GM12878 (cell line): ENCODE measurements at regions of chr21 and their contacts with region 1.

Region 1: DNA sequence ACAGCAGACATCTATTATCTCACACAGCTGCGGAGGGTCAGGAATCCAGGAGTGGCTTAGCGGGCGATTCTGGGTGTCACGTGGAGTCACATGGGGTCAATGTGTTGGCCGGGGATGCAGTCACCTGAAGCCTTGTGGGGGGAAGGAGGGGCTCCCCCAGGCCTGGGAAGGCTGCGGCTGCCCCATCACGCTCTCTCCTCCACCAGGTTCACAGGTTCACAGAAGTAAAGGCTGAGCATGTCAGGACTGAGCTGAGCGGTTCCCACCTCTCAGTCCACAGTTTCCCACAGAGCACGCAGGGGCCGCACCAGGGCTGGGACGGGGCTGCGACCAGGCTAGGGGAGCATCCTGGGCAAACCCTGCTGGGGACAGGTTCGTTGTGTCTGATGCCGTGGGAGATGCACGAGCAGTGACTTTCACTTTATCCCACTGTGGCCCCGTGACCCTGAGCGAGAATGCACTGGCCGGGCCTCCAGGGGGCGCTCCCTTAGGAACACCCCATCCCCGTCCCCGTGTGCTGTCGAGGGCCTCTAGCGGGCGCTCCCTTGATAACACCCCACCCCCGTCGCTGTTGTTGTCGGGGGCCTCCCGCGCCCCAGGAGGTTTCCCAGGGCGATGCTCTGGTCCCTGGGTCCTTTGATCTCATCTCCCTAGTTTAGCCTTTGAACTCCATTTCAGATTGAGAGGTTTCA is 73.2 kb upstream of the TRAPPC10 start:
- DNase-seq: peak; percentile 84
- ATAC-seq: peak; percentile 94
- H3K4me3 ChIP-seq: peak overlapping the region; percentile 70
- H3K27ac ChIP-seq: peak overlapping the region; percentile 79
- H3K4me1 ChIP-seq: peaks cover 26% of the 10 kb centered on the region
- H3K27me3 ChIP-seq: no peaks in the 10 kb centered on the region
- CTCF ChIP-seq: peak; percentile 100; a peak in 5 of 6 replicates
- EP300 ChIP-seq: peak; percentile 70 to 76; a peak in 3 of 4 replicates
- POLR2A ChIP-seq: peak; percentile 71
- RAD21 ChIP-seq: peak; percentile 95

Region 2: GRCh38 chr21:43718872-43719747 is 219.8 kb before region 1 on chr21 and contains the start of gene PDXK:
- CTCF ChIA-PET with region 1: no interaction called
- POLR2A ChIA-PET with region 1: no interaction called
- RAD21 ChIA-PET with region 1: interaction called, 3 read pairs
- SMC1A ChIA-PET with region 1: no interaction called
- in situ Hi-C with region 1: no loop called
- intact Hi-C with region 1: loop called (anchors 5 kb)
- DNase-seq: peak; percentile 35
- ATAC-seq: peak; percentile 69
- H3K4me3 ChIP-seq: peak within 1 kb of the TSS; percentile 88
- H3K27ac ChIP-seq: peak within 1 kb of the TSS; percentile 86
- H3K4me1 ChIP-seq: peaks cover 50% of the 10 kb centered on the region
- H3K27me3 ChIP-seq: no peaks in the 10 kb centered on the region
- CTCF ChIP-seq: peak; percentile 13 to 47 (median 15); a peak in 4 of 6 replicates
- EP300 ChIP-seq: peak; percentile 12 to 41; a peak in 1 of 4 replicates
- POLR2A ChIP-seq: peak; percentile 80
- RAD21 ChIP-seq: no peak
- polyA plus RNA-seq, gene PDXK: 3.7 to 11.4 TPM

Region 3: DNA sequence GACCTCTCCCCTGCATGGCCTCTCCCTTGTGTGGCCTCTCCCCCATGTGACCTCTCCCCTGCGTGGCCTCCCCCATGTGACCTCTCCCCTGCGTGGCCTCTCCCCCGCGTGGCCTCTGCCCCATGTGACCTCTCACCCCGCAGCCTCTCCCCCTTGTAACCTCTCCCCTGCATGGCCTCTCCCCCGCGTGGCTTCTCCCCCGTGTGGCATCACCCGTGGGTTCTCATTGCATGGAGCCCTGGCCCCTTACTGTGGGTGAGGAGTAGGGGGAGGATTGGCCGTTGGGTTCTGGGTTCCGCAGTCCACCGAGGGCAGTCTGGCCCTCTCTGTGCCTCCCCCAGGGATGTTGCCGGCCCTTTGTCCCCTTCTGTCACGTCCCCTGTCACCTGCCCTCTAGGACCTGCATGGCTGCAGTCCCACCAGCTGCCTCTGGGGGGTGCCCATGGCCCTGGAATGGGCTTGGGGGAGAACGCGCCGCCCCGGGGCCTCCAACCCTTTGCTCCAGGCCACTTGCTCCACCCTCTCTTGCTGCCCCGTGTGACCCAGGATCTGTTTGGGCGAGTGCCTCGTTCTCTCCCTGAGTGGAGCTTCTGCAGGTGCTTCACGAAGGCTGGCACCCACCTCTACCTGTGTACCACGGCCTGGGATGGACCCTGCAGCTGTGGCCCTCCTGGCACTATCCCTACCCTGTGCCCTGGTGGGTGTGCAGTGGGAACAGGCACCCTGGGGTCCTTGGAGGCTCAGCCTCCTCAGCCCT is 128.2 kb before region 1 on chr21:
- CTCF ChIA-PET with region 1: interaction called, 39 read pairs
- POLR2A ChIA-PET with region 1: interaction called, 4 read pairs
- RAD21 ChIA-PET with region 1: interaction called, 21 read pairs
- SMC1A ChIA-PET with region 1: interaction called, 3 read pairs
- in situ Hi-C with region 1: no loop called
- intact Hi-C with region 1: loop called (anchors 1 kb)
- DNase-seq: peak; percentile 51
- ATAC-seq: peak; percentile 91
- H3K4me3 ChIP-seq: no peak overlapping the region
- H3K27ac ChIP-seq: peak overlapping the region; percentile 50
- H3K4me1 ChIP-seq: peaks cover 44% of the 10 kb centered on the region
- H3K27me3 ChIP-seq: no peaks in the 10 kb centered on the region
- CTCF ChIP-seq: peak; percentile 98 to 99 (median 99)
- EP300 ChIP-seq: no peak
- POLR2A ChIP-seq: no peak
- RAD21 ChIP-seq: peak; percentile 99

Region 4: GRCh38 chr21:43816611-43817478 is 122.1 kb before region 1 on chr21:
- CTCF ChIA-PET with region 1: interaction called, 39 read pairs
- POLR2A ChIA-PET with region 1: interaction called, 3 read pairs
- RAD21 ChIA-PET with region 1: interaction called, 21 read pairs
- SMC1A ChIA-PET with region 1: interaction called, 6 read pairs
- in situ Hi-C with region 1: no loop called
- intact Hi-C with region 1: no loop called
- DNase-seq: no peak
- ATAC-seq: peak; percentile 32
- H3K4me3 ChIP-seq: no peak overlapping the region
- H3K27ac ChIP-seq: no peak overlapping the region
- H3K4me1 ChIP-seq: peaks cover 6% of the 10 kb centered on the region
- H3K27me3 ChIP-seq: no peaks in the 10 kb centered on the region
- CTCF ChIP-seq: peak in 2 of 3 experiments; percentile 11 to 22; a peak in 3 of 6 replicates
- EP300 ChIP-seq: no peak
- POLR2A ChIP-seq: no peak
- RAD21 ChIP-seq: no peak